IMR-90 (cell line): ENCODE measurements at regions of chr15 and their contacts with region 1.

Region 1: DNA sequence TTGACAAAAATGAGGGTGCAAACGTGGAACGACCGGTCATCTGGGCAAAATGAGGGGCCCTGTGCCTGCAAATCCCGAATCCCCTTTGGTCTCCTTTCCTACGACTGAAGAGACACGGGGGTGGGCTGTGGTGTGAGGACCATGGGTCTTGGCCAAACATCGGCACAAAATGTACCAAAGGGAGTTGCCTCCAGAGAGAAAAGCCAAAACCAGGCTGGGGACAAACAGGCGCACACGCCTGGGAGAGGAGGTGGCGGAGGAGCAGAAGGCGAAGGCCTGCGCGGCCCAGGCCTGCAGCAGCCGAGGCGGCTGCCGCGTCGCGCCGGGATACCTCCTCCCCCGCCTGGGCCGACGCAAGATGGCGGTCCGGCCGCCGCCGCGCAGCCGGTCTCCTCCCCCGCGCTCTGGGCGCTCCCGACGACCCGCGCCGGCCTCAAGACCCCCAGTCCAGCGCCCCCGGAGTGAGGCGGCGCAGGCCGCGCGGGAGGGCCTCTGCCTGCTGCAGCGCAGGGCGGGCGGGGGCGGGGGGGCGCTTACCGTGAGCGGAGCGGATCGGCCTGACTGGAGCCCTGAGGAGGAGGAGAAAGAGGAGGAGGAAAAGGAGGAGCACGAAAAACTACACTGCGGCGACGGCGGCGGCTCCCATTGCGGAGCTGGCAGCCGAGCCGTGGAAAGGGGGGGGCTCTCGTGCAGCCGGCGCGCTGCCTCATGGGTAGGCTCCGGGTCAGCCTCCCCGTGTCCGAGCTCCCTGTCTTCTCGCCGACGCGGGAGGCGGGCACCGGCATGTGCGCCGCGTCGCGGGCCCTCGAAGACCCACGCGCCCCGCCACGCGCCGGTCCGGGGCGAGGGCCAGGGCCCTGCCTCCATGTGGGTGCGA is at the start of gene ZNF280D:
- DNase-seq: peak; percentile 85
- ATAC-seq: peak; percentile 92
- H3K4me3 ChIP-seq: peak within 1 kb of the TSS; percentile 87
- H3K27ac ChIP-seq: peak within 1 kb of the TSS; percentile 94
- H3K4me1 ChIP-seq: peaks cover 4% of the 10 kb centered on the region
- H3K27me3 ChIP-seq: no peaks in the 10 kb centered on the region
- CTCF ChIP-seq: no peak
- POLR2A ChIP-seq: peak; percentile 75
- RAD21 ChIP-seq: no peak
- total RNA-seq, gene ZNF280D: 21.0 and 28.6 TPM in 2 replicates

Region 2: DNA sequence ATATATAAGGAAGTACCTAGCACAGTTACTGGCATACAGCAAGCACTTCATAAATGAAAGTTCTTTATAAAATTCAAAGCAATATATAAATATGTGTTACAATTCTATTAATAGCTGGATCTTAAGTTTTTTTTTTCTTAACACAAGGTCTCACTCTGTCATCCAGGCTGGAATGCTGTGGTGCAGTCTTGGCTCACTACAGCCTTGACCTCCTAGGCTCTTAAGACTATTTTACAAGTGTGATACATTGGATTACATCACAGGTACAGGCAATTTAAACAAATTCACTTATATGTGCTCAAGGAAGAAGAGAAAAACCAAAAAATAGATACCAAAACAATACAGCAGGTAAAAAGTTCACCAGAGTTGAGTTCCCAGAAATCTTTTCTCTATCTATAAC is 60.4 kb before region 1 on chr15:
- CTCF ChIA-PET with region 1: no interaction called
- POLR2A ChIA-PET with region 1: no interaction called
- dilution Hi-C with region 1: no loop called
- in situ Hi-C with region 1: no loop called
- intact Hi-C with region 1: no loop called
- DNase-seq: peak; percentile 79
- ATAC-seq: no peak
- H3K4me3 ChIP-seq: no peak overlapping the region
- H3K27ac ChIP-seq: no peak overlapping the region
- H3K4me1 ChIP-seq: no peaks in the 10 kb centered on the region
- H3K27me3 ChIP-seq: no peaks in the 10 kb centered on the region
- CTCF ChIP-seq: no peak
- POLR2A ChIP-seq: no peak
- RAD21 ChIP-seq: no peak

Region 3: GRCh38 chr15:56683908-56684307 is 49.3 kb before region 1 on chr15:
- CTCF ChIA-PET with region 1: no interaction called
- POLR2A ChIA-PET with region 1: no interaction called
- dilution Hi-C with region 1: no loop called
- in situ Hi-C with region 1: no loop called
- intact Hi-C with region 1: no loop called
- DNase-seq: no peak
- ATAC-seq: no peak
- H3K4me3 ChIP-seq: no peak overlapping the region
- H3K27ac ChIP-seq: no peak overlapping the region
- H3K4me1 ChIP-seq: no peaks in the 10 kb centered on the region
- H3K27me3 ChIP-seq: no peaks in the 10 kb centered on the region
- CTCF ChIP-seq: no peak
- POLR2A ChIP-seq: no peak
- RAD21 ChIP-seq: no peak

Region 4: DNA sequence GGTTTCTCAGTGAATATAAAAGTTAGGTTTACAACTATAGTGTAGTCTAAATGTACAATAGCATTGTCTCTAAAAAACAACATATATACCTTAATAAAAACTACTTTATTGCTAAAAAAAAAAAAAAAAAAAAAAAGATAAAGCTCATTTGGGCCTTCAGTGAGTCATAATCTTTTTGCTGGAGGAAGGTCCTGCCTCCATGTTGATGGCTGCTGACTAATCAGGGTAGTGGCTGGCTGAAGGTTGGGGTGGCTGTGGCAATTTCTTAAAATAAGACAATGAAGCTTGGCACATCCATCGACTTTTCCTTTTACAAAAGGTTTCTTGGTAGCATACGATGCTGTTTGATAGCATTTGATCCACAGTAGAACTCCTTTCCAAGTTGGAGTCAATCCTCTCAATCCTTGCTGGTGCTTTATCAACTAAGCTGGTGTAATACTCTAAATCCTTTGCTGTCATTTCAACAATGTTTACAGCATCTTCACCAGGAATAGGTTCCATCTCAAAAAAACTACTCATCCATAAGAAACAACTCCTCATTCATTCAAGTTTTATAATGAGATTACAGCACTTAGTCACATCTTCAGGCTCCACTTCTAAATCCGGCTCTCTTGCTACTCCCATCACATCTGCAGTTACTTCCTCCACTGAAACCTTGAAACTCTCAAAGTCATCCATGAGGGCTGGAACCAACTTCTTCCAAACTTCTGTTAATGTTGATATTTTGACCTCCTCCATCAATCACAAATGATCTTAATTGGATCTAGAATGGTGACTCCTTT is 13.2 kb before region 1 on chr15:
- CTCF ChIA-PET with region 1: no interaction called
- POLR2A ChIA-PET with region 1: no interaction called
- dilution Hi-C with region 1: no loop called
- in situ Hi-C with region 1: no loop called
- intact Hi-C with region 1: no loop called
- DNase-seq: no peak
- ATAC-seq: no peak
- H3K4me3 ChIP-seq: no peak overlapping the region
- H3K27ac ChIP-seq: no peak overlapping the region
- H3K4me1 ChIP-seq: no peaks in the 10 kb centered on the region
- H3K27me3 ChIP-seq: no peaks in the 10 kb centered on the region
- CTCF ChIP-seq: no peak
- POLR2A ChIP-seq: no peak
- RAD21 ChIP-seq: no peak

Region 5: GRCh38 chr15:56817321-56818080 is 84.3 kb after region 1 on chr15:
- CTCF ChIA-PET with region 1: no interaction called
- POLR2A ChIA-PET with region 1: no interaction called
- dilution Hi-C with region 1: no loop called
- in situ Hi-C with region 1: no loop called
- intact Hi-C with region 1: no loop called
- DNase-seq: peak; percentile 65
- ATAC-seq: peak; percentile 19; the same call in 1 of the 2 replicates
- H3K4me3 ChIP-seq: no peak overlapping the region
- H3K27ac ChIP-seq: no peak overlapping the region
- H3K4me1 ChIP-seq: peaks cover 8% of the 10 kb centered on the region
- H3K27me3 ChIP-seq: no peaks in the 10 kb centered on the region
- CTCF ChIP-seq: no peak
- POLR2A ChIP-seq: no peak
- RAD21 ChIP-seq: no peak

Region 6: GRCh38 chr15:57218826-57219576 is 485.8 kb after region 1 on chr15:
- CTCF ChIA-PET with region 1: no interaction called
- POLR2A ChIA-PET with region 1: no interaction called
- dilution Hi-C with region 1: no loop called
- in situ Hi-C with region 1: no loop called
- intact Hi-C with region 1: loop called (anchors 5 kb)
- DNase-seq: peak; percentile 96
- ATAC-seq: peak; percentile 65
- H3K4me3 ChIP-seq: peak overlapping the region; percentile 79
- H3K27ac ChIP-seq: peak overlapping the region; percentile 74; the same call in 1 of the 2 replicates
- H3K4me1 ChIP-seq: peaks cover 10% of the 10 kb centered on the region
- H3K27me3 ChIP-seq: no peaks in the 10 kb centered on the region
- CTCF ChIP-seq: no peak
- POLR2A ChIP-seq: no peak
- RAD21 ChIP-seq: no peak